Right ventricle myocardium inferior (tissue), 1 donor: ENCODE measurements at regions of chr9 and their contacts with region 1.

Region 1: GRCh38 chr9:124126571-124127289 is 115.2 kb downstream of the LHX2 start:
- DNase-seq: peak; percentile 89
- ATAC-seq: peak; percentile 66

Region 2: GRCh38 chr9:124062172-124062571 is 64.6 kb before region 1 on chr9:
- intact Hi-C with region 1: no loop called
- DNase-seq: no peak
- ATAC-seq: no peak

Region 3: DNA sequence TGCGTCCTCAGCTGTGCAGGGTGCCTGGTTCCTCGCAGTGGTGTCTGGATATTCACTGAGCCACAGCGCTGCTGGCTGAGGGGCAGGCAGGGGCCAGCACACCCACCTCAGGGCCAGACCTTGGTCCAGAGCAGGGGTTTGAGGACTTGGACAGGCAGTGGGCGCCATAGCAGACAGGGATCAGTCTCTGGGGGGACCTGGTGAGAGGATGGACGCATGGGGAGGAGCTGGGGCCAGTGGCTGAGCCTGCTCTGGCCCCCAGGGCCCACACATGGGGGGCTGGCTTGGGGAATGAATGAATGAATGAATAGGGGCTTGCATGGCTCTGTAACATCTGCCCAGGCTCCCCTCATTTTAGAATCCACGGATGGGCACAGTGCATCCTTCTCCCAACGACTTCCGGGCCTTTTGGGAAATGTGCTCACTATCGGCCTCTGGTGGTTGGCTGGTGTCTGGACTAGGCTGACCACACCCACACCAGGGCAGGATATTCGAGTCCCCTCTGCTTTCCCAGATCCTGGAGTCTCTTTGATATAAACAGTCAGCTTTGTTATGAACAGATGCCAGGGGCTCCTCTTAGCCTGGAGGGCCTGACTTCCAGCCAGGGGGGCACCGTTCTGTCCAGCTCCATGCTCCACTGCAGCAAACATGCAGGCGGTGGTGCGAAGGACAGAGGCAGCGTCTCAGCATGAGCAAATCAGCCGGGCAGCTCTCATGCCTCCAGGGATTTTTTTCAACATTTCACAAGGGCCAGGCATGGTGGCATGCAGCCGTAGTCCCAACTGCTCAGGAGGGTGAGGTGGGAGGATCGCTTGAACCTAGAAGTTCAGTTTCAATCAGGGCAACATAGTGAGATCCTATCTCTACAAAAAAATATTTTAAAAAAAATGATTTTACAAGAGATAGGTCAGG is 193.6 kb after region 1 on chr9:
- intact Hi-C with region 1: loop called (anchors 5 kb)
- DNase-seq: no peak
- ATAC-seq: peak; percentile 89

Region 4: DNA sequence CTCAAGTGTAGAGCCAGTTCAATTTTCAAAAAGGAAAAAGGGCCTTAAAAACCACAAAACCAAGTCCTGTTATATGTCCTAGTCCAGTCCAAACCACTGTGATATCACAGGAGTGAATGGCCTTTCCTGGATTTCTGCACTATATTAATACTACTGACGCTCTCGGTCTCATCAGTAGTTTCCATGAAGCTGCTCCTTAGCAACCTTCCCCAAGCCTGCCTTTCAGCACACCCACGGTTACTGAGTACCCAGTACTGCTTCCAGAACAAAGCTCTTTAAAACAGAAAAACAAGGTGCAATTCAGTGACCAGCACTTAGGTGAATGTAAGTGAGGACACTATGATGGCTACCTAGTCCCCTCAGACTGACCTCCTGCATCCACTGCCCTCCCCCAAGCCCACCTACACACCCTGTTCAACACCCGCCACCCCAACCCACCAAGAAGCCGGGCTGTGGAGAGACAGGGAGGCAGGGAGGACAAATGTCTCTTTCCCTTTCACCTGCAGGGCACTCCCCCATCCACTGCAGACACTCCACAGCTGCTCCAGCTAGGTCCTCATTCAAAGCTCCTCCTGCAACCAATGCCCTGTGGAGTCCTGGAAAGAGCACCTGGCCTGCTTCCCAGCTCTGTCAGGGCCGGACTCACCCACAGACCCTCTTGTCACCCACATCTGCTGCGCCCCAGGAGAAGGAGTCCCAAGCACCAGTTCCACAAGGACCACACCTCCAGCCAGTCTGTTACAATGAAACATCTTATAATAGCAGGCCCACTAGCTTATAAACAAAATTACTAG is 262.6 kb after region 1 on chr9:
- intact Hi-C with region 1: loop called (anchors 2 kb)
- DNase-seq: no peak
- ATAC-seq: no peak

Region 5: GRCh38 chr9:124537926-124538325 is 411.2 kb after region 1 on chr9:
- intact Hi-C with region 1: loop called (anchors 2 kb)
- DNase-seq: no peak
- ATAC-seq: no peak